ENCODE measurements at regions of chr11 and their contacts with region 1.

Region 1: DNA sequence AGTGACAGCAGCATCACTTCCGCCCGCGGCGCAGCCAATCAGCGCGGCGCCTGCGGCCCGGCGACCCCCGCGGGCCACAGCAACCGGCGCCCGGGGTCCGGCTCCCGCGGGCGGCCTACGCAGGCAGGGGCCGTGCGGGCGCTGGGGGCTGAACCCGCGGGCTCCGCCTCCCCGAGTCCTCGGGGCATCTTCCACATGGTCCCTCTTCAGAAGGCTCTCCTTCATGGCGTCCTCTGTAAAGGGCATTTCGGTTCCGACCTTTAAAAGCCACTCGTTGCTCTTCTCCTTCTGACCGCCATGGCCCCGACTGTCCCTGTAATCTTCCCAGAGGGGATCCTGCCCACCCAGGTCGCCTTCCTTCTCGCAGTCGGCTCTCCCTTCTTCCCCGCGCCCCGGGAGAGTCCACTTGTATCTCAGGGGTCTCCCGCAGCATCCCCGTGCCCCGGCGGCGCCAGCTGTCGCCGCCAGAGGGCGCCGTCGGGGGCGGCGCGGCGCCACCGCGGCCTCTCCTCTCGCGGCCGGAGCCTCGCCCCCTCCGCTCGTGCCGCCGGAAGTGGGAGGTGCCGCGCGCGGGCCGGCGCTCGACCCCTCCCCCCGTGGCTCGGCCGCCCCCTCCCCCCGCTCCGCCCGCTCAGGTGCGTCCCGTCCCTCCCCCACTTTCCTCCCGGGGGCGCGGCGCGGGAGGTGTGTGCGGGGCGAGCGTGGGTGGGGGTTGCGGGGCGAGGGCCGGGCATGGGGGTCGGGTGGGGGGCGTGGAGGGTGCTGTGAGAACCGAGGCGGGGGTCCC is at the start of gene RNF214:
- DNase-seq: peak; percentile 89
- total RNA-seq, gene RNF214: 27.6 TPM

Region 2: GRCh38 chr11:116787786-116788486 is 444.3 kb before region 1 on chr11 and contains the start of gene ZPR1:
- intact Hi-C with region 1: no loop called
- DNase-seq: peak; percentile 96
- total RNA-seq, gene ZPR1: 24.8 TPM

Region 3: DNA sequence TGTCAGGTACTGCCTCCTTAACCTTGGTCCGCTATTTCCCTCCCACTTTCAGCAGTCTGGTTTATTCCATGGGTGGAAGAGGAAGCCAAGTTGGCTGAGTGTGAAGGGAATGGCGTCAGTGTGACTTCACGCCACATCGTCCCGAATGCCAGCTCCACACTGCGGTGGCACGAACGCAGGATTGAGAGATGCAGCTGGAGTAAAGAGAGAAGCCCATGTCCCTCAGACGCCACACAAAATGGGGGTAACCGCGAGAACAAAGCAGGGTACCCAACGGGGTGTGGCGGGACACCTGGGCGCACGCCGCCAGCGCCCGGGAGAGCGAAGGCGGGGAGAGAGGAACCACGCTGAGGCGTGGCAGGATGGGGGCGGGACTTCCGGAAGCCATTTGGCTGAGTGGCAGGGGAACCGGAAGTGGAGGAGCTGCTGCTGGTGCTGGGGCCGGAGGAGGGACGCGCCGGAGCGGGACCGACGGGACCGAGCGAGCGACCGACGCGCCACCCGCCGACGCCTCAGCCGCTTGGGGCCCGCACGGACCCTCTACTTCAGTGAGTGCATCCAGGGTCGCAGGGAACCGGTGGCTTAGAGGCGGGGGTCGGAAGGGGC is 88.3 kb before region 1 on chr11 and contains the start of gene PAFAH1B2:
- intact Hi-C with region 1: loop called (anchors 5 kb)
- DNase-seq: peak; percentile 99
- total RNA-seq, gene PAFAH1B2: 68.9 TPM

Region 4: DNA sequence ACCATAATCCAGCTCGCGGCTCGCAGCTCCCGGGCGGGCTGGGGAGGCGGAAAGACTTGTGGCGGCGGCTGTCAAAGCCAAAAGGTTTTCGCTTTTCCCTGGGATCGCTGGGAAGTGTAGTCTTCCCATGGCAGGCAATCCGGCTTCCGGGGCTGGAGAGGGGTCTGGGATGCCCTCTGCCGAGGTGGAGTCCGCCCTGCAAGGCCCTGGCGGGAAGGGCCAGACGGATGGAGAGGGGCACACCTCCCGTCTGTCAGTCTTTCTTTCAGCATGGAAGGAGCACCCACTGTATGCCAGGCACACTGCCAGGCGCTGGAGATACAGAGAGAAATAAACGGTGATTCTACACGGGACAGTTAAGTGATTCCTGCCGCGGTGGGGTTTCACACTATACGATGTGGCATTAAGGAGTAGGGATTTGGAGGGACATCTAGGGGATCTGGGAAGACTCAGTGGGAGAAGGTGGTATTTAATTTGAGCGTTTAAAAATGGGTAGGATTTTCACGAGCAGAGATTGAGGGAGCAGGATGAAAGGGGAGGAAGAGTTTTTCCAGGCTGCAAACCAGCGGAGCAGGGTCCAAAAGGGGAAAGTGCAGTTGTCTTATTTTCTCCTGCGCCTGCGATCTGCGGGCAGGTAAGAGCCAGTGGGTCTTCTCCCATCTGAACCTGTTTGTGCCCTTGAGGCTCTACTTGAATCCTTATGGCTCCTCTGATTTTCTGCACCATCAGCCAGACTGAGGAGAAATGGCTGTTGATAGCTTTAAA is 84.1 kb after region 1 on chr11 and contains the start of gene BACE1:
- intact Hi-C with region 1: loop called (anchors 5 kb)
- DNase-seq: peak; percentile 90
- total RNA-seq, gene BACE1: 15.7 TPM

Measured in cardiac septum (tissue), 1 donor.